Activated naive CD4-positive, alpha-beta T cell treated with anti-CD3 and anti-CD28 coated beads, Interleukin-2, amount 10 ng/mL, durations not matched to agents 7 days and 5 days (primary cell): ENCODE measurements at regions of chr9 and their contacts with region 1.

Region 1: DNA sequence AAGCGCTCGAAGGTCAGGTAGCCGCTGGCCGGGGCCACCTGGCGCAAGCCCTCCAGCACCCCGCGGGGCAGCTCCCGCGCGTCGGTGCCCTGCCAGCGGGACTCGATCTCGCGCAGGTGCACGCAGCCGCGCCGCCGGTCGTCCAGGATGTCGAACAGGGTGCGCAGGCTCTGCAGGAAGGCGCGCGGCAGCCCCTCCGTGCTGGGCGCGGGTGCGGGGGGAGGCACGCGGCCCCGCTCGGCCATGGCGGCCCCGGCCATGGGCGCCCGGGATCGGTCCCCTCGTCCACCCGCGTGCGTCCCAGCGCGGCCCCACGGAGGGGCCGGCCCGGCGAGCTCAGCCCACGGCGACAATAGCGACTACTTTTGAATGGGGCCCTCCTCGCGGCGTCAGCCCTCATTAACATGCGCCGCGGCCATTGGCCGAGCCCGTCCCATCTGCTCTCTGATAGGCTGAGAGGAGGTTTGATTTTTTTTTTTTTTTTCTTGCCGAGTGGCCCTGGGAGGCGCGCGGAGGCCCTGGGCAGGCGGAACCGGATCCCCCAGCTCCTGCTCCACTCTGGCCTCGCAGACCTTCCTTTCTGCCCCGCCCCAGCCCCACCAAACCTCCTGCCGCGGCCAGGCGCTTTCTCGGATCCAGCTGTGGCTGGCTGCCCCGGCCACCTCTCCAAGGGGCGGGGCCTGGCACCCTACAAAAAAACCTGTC is at the start of gene SAPCD2:
- DNase-seq: peak; percentile 93
- H3K4me3 Mint-ChIP-seq: peak within 1 kb of the TSS; percentile 80
- H3K27ac Mint-ChIP-seq: peak within 1 kb of the TSS; percentile 81
- H3K4me1 Mint-ChIP-seq: peaks cover 33% of the 10 kb centered on the region
- H3K27me3 Mint-ChIP-seq: peaks cover 11% of the 10 kb centered on the region

Region 2: GRCh38 chr9:137029058-137029936 is 41.1 kb before region 1 on chr9:
- CTCF ChIA-PET with region 1: interaction called, 15 read pairs
- DNase-seq: peak; percentile 81
- H3K4me3 Mint-ChIP-seq: peak overlapping the region; percentile 71
- H3K27ac Mint-ChIP-seq: peak overlapping the region; percentile 87
- H3K4me1 Mint-ChIP-seq: peaks cover 58% of the 10 kb centered on the region
- H3K27me3 Mint-ChIP-seq: peaks cover 35% of the 10 kb centered on the region

Region 3: DNA sequence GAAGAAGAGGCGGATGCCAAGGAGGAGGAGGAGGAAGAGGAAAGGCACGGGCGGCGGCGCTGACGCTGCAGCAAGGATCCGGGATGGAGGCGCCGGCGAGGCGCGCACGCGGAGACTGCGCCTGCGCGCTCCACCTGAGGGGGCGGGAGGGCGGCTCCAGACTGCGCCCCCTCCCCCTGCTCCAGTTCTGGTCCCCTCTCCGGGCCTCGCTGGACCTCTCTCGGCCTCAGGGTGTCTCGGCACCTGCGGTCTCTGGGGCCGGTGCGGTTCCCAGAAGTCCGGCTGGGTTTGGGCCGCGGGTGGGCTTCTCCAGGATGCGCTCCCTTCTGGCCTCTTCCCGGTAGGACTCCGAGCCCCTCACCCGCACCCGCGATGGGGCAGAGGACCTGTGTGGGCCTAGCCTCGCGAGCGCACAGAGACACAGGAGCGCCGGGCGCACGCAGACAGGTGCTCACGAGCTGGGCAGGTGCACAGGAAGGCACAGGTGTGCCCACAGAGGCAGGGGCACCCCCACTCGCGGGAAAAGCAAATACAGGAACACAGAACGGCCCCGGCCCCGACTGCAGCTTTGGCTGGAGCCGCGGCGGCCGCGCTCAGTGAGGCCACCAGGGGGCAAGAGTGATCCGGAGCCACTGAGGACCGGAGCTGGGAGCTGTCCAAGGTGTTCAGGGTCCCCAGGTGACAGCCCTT is 24.1 kb before region 1 on chr9 and contains the start of gene NPDC1:
- CTCF ChIA-PET with region 1: interaction called, 103 read pairs
- DNase-seq: peak; percentile 92
- H3K4me3 Mint-ChIP-seq: peak within 1 kb of the TSS; percentile 75
- H3K27ac Mint-ChIP-seq: peak within 1 kb of the TSS; percentile 68
- H3K4me1 Mint-ChIP-seq: peaks cover 35% of the 10 kb centered on the region
- H3K27me3 Mint-ChIP-seq: peaks cover 86% of the 10 kb centered on the region

Region 4: DNA sequence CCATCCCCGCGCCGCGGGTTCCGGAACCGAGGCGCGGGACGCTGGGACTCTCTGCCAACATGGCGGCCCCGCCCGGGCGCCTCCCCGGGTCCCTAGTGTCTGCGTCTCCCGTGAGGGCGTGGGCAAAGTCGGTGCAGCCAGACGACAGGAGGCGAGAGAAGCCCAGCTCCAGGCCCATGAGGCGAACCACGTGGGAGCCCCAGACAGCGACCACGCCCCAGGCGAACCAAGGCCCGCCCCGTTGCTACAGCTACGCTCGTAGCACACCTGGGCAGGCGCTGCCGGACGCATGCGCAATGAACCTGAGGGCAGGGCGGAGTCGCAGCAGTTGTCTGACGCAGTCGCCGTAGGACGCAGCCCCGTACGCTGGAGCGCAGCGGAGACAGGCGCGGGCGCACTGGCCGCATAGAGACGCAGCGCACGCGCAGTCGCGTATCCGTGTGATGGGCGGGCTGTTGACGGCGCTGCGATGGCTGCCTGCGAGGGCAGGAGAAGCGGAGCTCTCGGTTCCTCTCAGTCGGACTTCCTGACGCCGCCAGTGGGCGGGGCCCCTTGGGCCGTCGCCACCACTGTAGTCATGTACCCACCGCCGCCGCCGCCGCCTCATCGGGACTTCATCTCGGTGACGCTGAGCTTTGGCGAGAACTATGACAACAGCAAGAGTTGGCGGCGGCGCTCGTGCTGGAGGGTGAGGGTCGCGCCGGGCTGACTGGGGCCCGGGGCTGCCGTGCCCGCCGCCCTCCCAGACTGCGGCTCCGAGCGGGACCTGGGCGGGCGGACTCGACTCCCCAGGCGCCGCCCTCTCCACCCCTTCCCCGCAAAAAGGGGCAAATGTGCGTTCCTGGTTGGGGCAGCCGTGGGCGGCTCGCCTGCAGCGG is 16.4 kb after region 1 on chr9 and contains the start of gene MAN1B1:
- CTCF ChIA-PET with region 1: interaction called, 13 read pairs
- DNase-seq: peak; percentile 100
- H3K4me3 Mint-ChIP-seq: peak within 1 kb of the TSS; percentile 92
- H3K27ac Mint-ChIP-seq: peak within 1 kb of the TSS; percentile 96
- H3K4me1 Mint-ChIP-seq: peaks cover 44% of the 10 kb centered on the region
- H3K27me3 Mint-ChIP-seq: no peaks in the 10 kb centered on the region

Region 5: GRCh38 chr9:137095664-137096517 is 25.5 kb after region 1 on chr9:
- CTCF ChIA-PET with region 1: interaction called, 27 read pairs
- DNase-seq: peak; percentile 93
- H3K4me3 Mint-ChIP-seq: peak overlapping the region; percentile 72
- H3K27ac Mint-ChIP-seq: peak overlapping the region; percentile 98
- H3K4me1 Mint-ChIP-seq: peaks cover 23% of the 10 kb centered on the region
- H3K27me3 Mint-ChIP-seq: no peaks in the 10 kb centered on the region

Region 6: GRCh38 chr9:137162505-137163100 is 92.2 kb after region 1 on chr9:
- CTCF ChIA-PET with region 1: no interaction called
- DNase-seq: no peak
- H3K4me3 Mint-ChIP-seq: no peak overlapping the region
- H3K27ac Mint-ChIP-seq: no peak overlapping the region
- H3K4me1 Mint-ChIP-seq: peaks cover 14% of the 10 kb centered on the region
- H3K27me3 Mint-ChIP-seq: peaks cover 97% of the 10 kb centered on the region